WTC11 (cell line): ENCODE measurements at regions of chr16 and their contacts with region 1.

Region 1: GRCh38 chr16:66830422-66831404 is at the start of gene NAE1:
- DNase-seq: peak; percentile 90
- ATAC-seq: peak; percentile 96
- H3K4me3 Mint-ChIP-seq: peak within 1 kb of the TSS; percentile 67
- H3K27ac Mint-ChIP-seq: no peak within 1 kb of the TSS
- H3K4me1 Mint-ChIP-seq: peaks cover 20% of the 10 kb centered on the region
- H3K27me3 Mint-ChIP-seq: peaks cover 14% of the 10 kb centered on the region
- CTCF ChIP-seq: peak; percentile 87
- total RNA-seq, gene NAE1: 103 to 129 TPM (median 107 TPM) in 3 replicates

Region 2: DNA sequence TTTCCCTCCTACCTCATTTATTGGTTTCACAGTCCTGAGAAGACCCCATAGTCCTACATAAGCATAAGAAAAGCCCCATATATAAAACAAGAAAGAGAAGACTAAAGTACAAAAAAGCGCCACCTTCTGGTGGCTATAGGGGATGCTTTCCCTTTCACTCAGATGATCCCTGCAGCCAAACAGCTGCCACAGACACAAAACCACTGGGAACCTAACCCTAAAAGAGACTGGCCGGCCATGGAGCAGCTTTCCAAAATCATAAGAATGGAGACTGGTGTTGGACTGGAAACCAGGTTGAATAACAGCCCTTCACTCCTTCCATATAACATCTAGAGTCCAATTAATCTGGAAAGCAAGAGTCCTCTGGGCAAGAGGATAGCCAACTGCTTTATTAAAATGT is 90.7 kb before region 1 on chr16:
- CTCF ChIA-PET with region 1: interaction called, 16 read pairs
- POLR2A ChIA-PET with region 1: interaction called, 7 read pairs
- DNase-seq: peak; percentile 40
- ATAC-seq: peak; percentile 85
- H3K4me3 Mint-ChIP-seq: no peak overlapping the region
- H3K27ac Mint-ChIP-seq: peak overlapping the region; percentile 90
- H3K4me1 Mint-ChIP-seq: peaks cover 18% of the 10 kb centered on the region
- H3K27me3 Mint-ChIP-seq: no peaks in the 10 kb centered on the region
- CTCF ChIP-seq: peak; percentile 61

Region 3: DNA sequence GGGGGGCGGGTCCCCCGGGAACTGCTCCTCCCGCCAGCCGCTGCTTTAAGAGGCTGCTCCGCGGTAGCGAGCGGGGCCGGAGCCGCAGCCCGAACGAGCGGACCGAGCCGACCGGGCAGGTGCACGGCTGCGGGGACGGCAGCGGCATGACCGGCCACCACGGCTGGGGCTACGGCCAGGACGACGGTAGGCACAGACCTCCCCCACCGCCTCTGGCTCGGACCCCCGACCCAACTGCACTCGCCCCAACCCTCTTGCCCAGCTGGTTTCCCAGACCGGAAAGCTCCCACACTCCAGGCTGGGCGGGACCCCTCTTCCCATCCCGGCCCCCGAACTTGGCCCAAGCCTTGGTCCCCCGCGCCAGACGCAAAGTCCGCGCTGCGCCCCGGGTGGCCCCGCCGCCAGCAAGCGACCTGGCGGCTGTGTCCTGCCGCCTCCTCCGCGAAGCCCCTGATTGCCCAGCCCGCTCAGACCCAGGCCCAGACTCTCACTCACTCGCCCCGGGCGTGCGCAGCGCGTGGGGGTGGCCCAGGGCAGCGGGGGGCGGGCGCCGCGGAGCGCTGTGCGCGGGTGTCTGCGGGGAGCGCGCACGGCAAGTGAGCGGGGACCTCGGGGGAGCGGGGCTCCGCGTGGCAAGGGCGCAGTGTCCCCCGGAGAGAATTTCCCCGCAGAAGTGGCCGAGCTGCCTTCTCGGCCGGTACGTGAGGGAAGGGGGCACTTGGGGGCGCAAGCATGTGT is 13.8 kb after region 1 on chr16 and contains the start of gene CA7:
- CTCF ChIA-PET with region 1: interaction called, 76 read pairs
- POLR2A ChIA-PET with region 1: no interaction called
- DNase-seq: peak; percentile 59
- ATAC-seq: no peak; the same call in 1 of the 2 replicates
- H3K4me3 Mint-ChIP-seq: peak within 1 kb of the TSS; percentile 81
- H3K27ac Mint-ChIP-seq: no peak within 1 kb of the TSS
- H3K4me1 Mint-ChIP-seq: peaks cover 13% of the 10 kb centered on the region
- H3K27me3 Mint-ChIP-seq: peaks cover 85% of the 10 kb centered on the region
- CTCF ChIP-seq: no peak
- total RNA-seq, gene CA7: 1.4 to 2.2 TPM (median 1.6 TPM) in 3 replicates

Region 4: DNA sequence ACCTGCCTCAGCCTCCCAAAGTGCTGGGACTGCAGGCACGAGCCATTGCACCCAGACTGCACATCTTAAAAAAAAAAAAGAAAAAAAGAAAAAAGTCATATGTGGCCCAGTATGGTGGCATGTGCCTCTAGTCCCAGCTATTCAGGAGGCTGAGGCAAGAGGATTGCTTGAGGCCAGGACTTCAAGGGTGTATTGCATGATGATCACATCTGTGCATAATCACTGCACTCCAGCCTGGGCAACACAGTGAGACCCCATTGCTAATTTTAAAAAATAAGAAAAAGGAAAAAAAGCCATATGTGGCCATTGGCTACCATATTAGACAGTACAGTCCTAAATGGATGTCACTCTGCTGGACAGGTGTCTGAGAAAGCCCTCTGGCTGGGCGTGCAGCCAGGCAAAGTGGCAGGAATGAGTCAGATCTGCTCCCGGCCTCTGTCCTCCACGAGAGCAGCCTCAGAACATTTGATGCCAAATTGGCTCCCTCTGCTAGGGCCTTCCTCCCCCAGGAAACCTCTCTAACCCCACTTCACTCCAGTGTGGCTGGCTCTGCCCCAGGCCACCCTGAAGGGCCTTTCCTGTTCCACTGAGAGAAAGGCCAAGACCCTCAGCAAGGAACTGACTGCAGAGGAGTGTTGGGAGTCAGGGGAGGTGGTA is 28.2 kb after region 1 on chr16:
- CTCF ChIA-PET with region 1: interaction called, 41 read pairs
- POLR2A ChIA-PET with region 1: no interaction called
- DNase-seq: no peak
- ATAC-seq: no peak
- H3K4me3 Mint-ChIP-seq: no peak overlapping the region
- H3K27ac Mint-ChIP-seq: no peak overlapping the region
- H3K4me1 Mint-ChIP-seq: no peaks in the 10 kb centered on the region
- H3K27me3 Mint-ChIP-seq: no peaks in the 10 kb centered on the region; the same call in 1 of the 2 replicates
- CTCF ChIP-seq: no peak

Region 5: DNA sequence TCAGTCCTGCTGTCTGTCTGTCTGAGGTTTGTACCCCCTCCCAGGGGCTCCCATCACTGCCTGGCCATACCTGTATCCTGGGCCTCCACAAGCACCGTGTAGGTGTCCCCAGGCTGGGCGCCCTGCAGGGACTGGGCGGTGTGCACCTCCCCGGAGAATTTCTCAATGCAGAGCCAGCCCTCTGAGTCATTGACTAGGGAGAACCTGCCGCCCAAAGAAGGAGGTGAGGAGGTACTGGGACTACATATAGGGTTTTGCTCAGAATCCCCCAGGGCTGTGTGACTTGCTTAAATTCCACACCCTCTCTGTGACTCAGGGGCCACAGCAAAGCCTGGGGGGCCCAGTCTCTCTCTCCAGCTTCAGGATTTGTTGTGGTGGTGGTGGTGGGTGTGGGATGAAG is 80.4 kb after region 1 on chr16:
- CTCF ChIA-PET with region 1: interaction called, 11 read pairs
- POLR2A ChIA-PET with region 1: no interaction called
- DNase-seq: no peak
- ATAC-seq: no peak
- H3K4me3 Mint-ChIP-seq: no peak overlapping the region
- H3K27ac Mint-ChIP-seq: no peak overlapping the region
- H3K4me1 Mint-ChIP-seq: no peaks in the 10 kb centered on the region
- H3K27me3 Mint-ChIP-seq: peaks cover 13% of the 10 kb centered on the region
- CTCF ChIP-seq: no peak

Region 6: DNA sequence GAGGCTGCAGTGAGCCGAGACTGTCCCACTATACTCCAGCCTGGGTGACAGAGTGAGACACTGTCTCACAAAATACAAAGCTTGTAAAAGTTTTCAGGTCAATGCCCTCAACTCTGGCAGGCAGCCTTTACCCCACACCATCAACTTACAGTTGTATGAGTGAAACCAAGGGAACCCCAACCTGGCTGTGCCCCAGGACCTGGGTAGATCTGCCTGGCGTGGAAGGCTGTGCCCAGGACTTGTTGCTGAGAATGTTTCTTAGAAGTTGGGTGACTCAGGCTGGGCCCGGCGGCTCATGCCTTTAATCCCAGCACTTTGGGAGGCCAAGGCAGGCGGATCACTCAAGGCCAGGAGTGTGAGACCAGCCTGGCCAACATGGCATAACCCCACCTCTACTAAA is 138.1 kb after region 1 on chr16:
- CTCF ChIA-PET with region 1: no interaction called
- POLR2A ChIA-PET with region 1: no interaction called
- DNase-seq: no peak
- ATAC-seq: no peak
- H3K4me3 Mint-ChIP-seq: no peak overlapping the region
- H3K27ac Mint-ChIP-seq: no peak overlapping the region
- H3K4me1 Mint-ChIP-seq: no peaks in the 10 kb centered on the region
- H3K27me3 Mint-ChIP-seq: no peaks in the 10 kb centered on the region; the same call in 1 of the 2 replicates
- CTCF ChIP-seq: no peak